Heart left ventricle (tissue), 16 donors: ENCODE measurements at regions of chr1 and their contacts with region 1.

Region 1: DNA sequence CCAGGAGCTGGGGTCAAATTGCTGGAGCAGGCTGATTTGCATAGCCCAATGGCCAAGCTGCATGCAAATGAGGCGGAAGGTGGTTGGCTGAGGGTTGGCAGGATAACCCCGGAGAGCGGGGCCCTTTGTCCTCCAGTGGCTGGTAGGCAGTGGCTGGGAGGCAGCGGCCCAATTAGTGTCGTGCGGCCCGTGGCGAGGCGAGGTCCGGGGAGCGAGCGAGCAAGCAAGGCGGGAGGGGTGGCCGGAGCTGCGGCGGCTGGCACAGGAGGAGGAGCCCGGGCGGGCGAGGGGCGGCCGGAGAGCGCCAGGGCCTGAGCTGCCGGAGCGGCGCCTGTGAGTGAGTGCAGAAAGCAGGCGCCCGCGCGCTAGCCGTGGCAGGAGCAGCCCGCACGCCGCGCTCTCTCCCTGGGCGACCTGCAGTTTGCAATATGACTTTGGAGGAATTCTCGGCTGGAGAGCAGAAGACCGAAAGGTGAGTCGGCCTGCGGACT is at the start of gene GADD45A:
- DNase-seq: peak; percentile 99
- ATAC-seq: peak; percentile 92 to 96 (median 96)
- H3K4me3 ChIP-seq: peak within 1 kb of the TSS; percentile 64 to 97 (median 84)
- H3K27ac ChIP-seq: peak within 1 kb of the TSS; percentile 94 to 99 (median 98)
- H3K4me1 ChIP-seq: peaks cover 6 to 54% (median 30%) of the 10 kb centered on the region in 12 donors
- H3K27me3 ChIP-seq: no peaks in the 10 kb centered on the region
- CTCF ChIP-seq: no peak
- POLR2A ChIP-seq: peak; percentile 98 to 100
- total RNA-seq, gene GADD45A: 26.5 to 119 (median 45.8) TPM

Region 2: GRCh38 chr1:67535474-67535873 is 149.6 kb before region 1 on chr1:
- intact Hi-C with region 1: loop called in 7 of 10 experiments (anchors 2 to 10 kb)
- DNase-seq: peak; percentile 64 to 80 (median 72)
- ATAC-seq: peak; percentile 63 to 89 (median 87)
- H3K4me3 ChIP-seq: no peak overlapping the region
- H3K27ac ChIP-seq: no peak overlapping the region
- H3K4me1 ChIP-seq: peaks cover 0 to 22% (median 5%) of the 10 kb centered on the region in 12 donors
- H3K27me3 ChIP-seq: no peaks in the 10 kb centered on the region
- CTCF ChIP-seq: peak; percentile 69 to 93 (median 88)
- POLR2A ChIP-seq: no peak

Region 3: DNA sequence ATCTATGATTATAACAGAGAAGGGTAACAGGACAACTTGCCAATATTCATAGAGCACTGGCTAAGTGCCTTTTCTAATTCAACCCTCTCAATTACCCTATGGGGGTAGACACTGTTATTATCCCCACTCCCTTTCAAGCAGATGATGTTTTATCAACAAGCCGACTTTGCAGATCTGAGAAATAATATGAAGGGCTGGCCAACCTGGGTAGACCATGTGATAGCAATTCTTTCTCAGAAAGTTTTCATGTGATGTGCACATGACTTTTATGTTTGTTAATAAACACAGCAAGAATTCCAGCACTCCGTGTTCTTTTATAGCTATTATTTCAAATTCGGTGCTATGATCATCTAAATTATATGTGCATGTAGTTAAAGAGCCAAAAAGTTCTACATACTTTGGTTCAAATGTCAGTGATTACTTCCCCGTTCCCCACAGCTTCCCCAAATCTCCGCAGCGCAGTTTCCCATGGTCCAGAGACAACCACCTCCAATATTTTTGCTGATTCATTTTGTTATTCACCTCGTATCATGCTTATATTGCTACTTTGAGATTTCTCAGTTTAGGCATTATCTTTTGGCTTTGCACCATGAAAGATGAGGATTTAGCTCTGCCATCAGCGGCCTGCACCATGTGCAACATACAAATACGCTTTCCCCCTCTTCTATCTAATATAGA is 96.8 kb before region 1 on chr1:
- intact Hi-C with region 1: loop called in 1 of 10 experiments (anchors 2 kb)
- DNase-seq: no peak
- ATAC-seq: no peak
- H3K4me3 ChIP-seq: no peak overlapping the region
- H3K27ac ChIP-seq: peak overlapping the region in 3 of 12 donors; percentile 4 to 26 (median 5)
- H3K4me1 ChIP-seq: peaks cover 0 to 64% (median 27%) of the 10 kb centered on the region in 12 donors
- H3K27me3 ChIP-seq: no peaks in the 10 kb centered on the region
- CTCF ChIP-seq: no peak
- POLR2A ChIP-seq: no peak

Region 4: GRCh38 chr1:67723620-67724019 is 38.5 kb after region 1 on chr1:
- intact Hi-C with region 1: loop called in 8 of 10 experiments (anchors 2 to 5 kb)
- DNase-seq: no peak
- ATAC-seq: peak; percentile 39 to 80 (median 78)
- H3K4me3 ChIP-seq: no peak overlapping the region
- H3K27ac ChIP-seq: peak overlapping the region in 11 of 12 donors; percentile 26 to 74 (median 63)
- H3K4me1 ChIP-seq: peaks cover 11 to 53% (median 35%) of the 10 kb centered on the region in 12 donors
- H3K27me3 ChIP-seq: no peaks in the 10 kb centered on the region
- CTCF ChIP-seq: no peak
- POLR2A ChIP-seq: no peak

Region 5: DNA sequence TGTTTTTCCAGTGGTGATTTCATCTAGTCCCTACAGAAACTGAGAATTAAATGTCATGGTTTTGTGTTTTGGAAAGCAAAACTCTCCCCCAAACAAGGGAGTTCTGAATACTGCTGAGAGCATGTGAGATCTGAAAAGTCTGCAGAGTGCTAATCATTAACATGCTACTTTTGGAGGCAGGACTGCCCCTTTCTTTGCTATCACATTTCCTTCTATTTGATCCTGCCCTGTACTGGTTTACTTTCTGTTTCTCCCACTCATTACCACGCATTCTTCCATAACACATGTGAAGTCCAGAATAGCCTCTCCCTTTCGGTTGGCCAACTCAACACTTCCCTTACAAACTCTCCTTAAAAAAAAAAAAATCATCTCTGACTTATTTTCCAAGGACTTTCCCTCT is 63.5 kb after region 1 on chr1:
- intact Hi-C with region 1: loop called in 5 of 10 experiments (anchors 2 to 10 kb)
- DNase-seq: no peak
- ATAC-seq: peak; percentile 20 to 80 (median 73)
- H3K4me3 ChIP-seq: peak overlapping the region in 7 of 12 donors; percentile 5 to 35 (median 22)
- H3K27ac ChIP-seq: peak overlapping the region in 11 of 12 donors; percentile 1 to 80 (median 62)
- H3K4me1 ChIP-seq: peaks cover 0 to 68% (median 39%) of the 10 kb centered on the region in 12 donors
- H3K27me3 ChIP-seq: no peaks in the 10 kb centered on the region
- CTCF ChIP-seq: no peak
- POLR2A ChIP-seq: no peak

Region 6: GRCh38 chr1:67832737-67833601 is 147.9 kb after region 1 on chr1 and contains the start of gene GNG12:
- intact Hi-C with region 1: loop called in 4 of 10 experiments (anchors 5 to 10 kb)
- DNase-seq: peak; percentile 71 to 85 (median 76)
- ATAC-seq: peak; percentile 53 to 93 (median 80)
- H3K4me3 ChIP-seq: peak within 1 kb of the TSS; percentile 66 to 93 (median 86)
- H3K27ac ChIP-seq: peak within 1 kb of the TSS; percentile 37 to 86 (median 82)
- H3K4me1 ChIP-seq: peaks cover 0 to 26% (median 5%) of the 10 kb centered on the region in 12 donors
- H3K27me3 ChIP-seq: peaks cover 0 to 44% (median 0%) of the 10 kb centered on the region in 9 donors
- CTCF ChIP-seq: no peak
- POLR2A ChIP-seq: peak in 1 of 2 donors; percentile 25
- total RNA-seq, gene GNG12: 27.2 to 80.2 (median 44.6) TPM